ENCODE measurements at regions of chr7 and their contacts with region 1.

Region 1: DNA sequence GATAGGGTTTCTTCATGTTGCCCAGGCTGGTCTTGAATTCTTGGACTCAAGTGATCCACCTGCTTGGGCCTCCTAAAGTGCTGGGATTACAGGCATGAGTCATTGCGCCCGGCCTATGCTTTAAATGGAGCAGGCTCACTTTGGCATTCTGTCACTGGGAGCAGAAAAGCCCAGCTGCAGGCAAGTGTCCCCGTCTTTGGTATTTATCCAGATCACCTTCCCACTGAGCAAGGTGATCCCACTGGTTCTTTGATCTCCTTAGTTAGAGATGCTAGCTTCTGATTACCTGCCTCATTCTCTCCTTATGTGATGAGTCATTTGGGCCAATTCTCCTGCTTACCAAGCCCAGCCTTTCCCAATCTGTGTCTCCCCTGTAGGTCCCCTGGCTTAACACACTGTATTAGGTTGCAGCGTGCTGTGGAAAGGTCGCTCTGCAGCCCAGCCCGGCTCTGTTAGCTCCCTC is 39.3 kb downstream of the SPDYE5 start:
- DNase-seq: no peak
- ATAC-seq: no peak
- H3K4me3 Mint-ChIP-seq: no peak overlapping the region
- H3K27ac Mint-ChIP-seq: no peak overlapping the region
- H3K4me1 Mint-ChIP-seq: peaks cover 7% of the 10 kb centered on the region
- H3K27me3 Mint-ChIP-seq: no peaks in the 10 kb centered on the region
- CTCF ChIP-seq: no peak

Region 2: DNA sequence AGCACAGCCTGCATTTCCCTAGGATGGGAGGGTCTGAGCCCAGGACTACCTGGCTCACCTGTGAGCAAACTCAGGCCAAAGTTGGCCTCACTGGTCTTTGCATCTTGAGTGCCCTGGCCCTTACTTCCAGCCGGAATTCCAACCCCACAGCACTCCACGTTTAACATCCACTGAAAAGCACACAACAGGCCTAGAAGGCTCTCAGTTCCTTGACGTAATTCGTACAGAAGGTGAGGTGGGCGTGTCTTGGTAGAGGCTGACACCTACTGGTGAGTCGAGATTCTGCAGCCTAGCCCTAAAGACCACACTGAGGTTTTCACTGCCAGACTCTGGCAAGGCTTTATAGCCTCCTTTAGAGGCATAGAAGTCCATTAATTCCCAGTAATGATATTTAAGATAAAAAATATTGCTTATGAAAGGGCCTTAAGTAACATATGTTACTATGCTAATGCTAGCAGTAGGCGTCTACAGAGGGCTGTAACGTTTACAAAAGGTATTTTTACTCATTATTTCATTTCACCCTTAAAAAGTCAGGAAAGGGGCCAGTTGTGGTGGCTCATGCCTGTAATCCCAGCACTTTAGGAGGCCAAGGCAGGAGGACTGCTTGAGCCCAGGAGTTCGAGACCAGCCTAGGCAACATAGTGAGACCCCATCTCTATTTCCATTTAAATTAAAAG is 111.6 kb after region 1 on chr7:
- CTCF ChIA-PET with region 1: no interaction called
- POLR2A ChIA-PET with region 1: no interaction called
- intact Hi-C with region 1: loop called (anchors 5 kb)
- DNase-seq: peak; percentile 83
- ATAC-seq: peak; percentile 96
- H3K4me3 Mint-ChIP-seq: no peak overlapping the region
- H3K27ac Mint-ChIP-seq: no peak overlapping the region
- H3K4me1 Mint-ChIP-seq: peaks cover 7% of the 10 kb centered on the region
- H3K27me3 Mint-ChIP-seq: peaks cover 5% of the 10 kb centered on the region
- CTCF ChIP-seq: peak; percentile 93